CD8-positive, alpha-beta memory T cell (primary cell): ENCODE measurements at regions of chr1 and their contacts with region 1.

Region 1: DNA sequence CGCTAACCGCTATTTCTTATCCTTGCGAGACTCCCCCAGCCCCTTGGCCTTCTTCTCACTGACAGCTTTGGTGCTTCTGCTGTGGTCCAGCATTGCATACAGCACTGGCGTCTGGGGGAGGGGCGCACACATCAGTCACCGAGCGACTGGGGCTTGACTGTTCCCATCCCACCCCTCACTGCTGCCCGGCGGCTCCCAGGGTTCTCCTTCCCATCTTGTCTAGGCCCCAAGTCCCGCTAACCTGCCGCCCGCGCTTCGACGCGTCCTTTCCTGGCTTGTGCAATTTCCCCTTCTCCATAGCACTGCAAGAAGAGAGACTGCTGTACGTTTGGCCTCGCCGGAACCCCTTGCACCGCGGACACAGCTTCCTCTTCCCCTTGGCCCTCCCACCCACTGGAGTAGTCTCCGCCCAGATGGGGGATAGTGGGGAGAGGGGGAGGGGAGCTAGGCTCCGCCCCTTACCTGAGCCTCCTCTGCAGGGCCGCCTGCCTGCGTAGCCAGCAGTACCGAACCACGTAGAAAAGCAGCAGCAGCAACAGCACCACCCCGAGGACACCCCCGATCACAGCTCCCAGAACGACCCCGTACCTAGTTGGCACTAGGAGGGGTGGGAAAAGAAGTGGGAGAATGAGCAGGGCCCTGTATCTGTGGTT is 3.8 kb downstream of the MPZ start:
- DNase-seq: peak; percentile 73 to 95 (median 92)
- H3K4me3 ChIP-seq: peak overlapping the region; percentile 89
- H3K4me3 Mint-ChIP-seq: peak overlapping the region; percentile 91 to 99 (median 93)
- H3K27ac ChIP-seq: peak overlapping the region; percentile 78
- H3K27ac Mint-ChIP-seq: peak overlapping the region; percentile 79 to 100 (median 93)
- H3K4me1 ChIP-seq: peaks cover 30% of the 10 kb centered on the region
- H3K4me1 Mint-ChIP-seq: peaks cover 30 to 49% (median 42%) of the 10 kb centered on the region in 3 donors
- H3K27me3 ChIP-seq: no peaks in the 10 kb centered on the region
- H3K27me3 Mint-ChIP-seq: no peaks in the 10 kb centered on the region

Region 2: DNA sequence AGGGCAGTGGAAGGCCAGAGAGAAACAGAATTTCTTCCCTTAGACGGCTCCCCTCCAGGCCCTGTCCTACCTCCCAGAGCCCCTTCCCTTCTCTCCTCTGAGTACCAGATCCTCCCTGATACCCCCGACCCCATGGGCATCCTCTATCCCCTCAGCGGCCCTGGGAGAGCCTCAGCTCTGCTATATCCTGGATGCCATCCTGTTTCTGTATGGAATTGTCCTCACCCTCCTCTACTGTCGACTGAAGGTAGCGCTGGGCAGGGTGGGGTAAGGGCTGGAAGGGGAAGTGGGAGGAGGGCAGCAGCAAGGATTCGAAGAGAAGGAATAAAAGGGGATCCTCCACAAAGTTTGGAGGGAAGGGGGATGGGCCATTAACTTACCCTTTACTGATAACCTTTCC is 88.2 kb before region 1 on chr1:
- CTCF ChIA-PET with region 1: no interaction called
- POLR2A ChIA-PET with region 1: no interaction called
- DNase-seq: no peak
- H3K4me3 ChIP-seq: no peak overlapping the region
- H3K4me3 Mint-ChIP-seq: peak overlapping the region in 2 of 7 donors; percentile 17 to 23
- H3K27ac ChIP-seq: no peak overlapping the region
- H3K27ac Mint-ChIP-seq: peak overlapping the region in 2 of 8 donors; percentile 78 to 80
- H3K4me1 ChIP-seq: peaks cover 37% of the 10 kb centered on the region
- H3K4me1 Mint-ChIP-seq: peaks cover 24 to 42% (median 31%) of the 10 kb centered on the region in 3 donors
- H3K27me3 ChIP-seq: no peaks in the 10 kb centered on the region
- H3K27me3 Mint-ChIP-seq: peaks cover 0 to 3% of the 10 kb centered on the region in 2 donors

Region 3: DNA sequence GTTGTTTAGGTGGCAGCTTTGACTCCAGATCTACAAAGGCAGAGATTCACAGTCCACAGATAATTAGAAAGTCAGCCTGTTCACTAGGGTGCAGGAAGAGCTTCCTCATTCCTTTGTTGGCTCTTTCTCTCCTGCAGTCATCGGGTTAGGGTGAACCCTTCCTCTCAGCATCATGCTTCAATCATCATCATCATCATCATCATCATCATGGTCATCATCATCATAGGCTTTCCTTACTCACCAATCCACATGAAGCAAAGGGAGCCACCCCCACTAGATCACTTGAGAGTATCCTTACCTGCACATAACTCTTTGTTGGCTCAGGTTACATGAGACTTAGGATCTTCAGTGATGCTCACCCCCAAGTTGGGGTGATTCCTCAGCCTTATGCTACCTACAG is 15.2 kb before region 1 on chr1:
- CTCF ChIA-PET with region 1: interaction called, 17 read pairs
- POLR2A ChIA-PET with region 1: interaction called, 5 read pairs
- DNase-seq: no peak
- H3K4me3 ChIP-seq: no peak overlapping the region
- H3K4me3 Mint-ChIP-seq: no peak overlapping the region
- H3K27ac ChIP-seq: no peak overlapping the region
- H3K27ac Mint-ChIP-seq: no peak overlapping the region
- H3K4me1 ChIP-seq: no peaks in the 10 kb centered on the region
- H3K4me1 Mint-ChIP-seq: peaks cover 0 to 4% (median 0%) of the 10 kb centered on the region in 3 donors
- H3K27me3 ChIP-seq: no peaks in the 10 kb centered on the region
- H3K27me3 Mint-ChIP-seq: peaks cover 0 to 4% of the 10 kb centered on the region in 2 donors

Region 4: DNA sequence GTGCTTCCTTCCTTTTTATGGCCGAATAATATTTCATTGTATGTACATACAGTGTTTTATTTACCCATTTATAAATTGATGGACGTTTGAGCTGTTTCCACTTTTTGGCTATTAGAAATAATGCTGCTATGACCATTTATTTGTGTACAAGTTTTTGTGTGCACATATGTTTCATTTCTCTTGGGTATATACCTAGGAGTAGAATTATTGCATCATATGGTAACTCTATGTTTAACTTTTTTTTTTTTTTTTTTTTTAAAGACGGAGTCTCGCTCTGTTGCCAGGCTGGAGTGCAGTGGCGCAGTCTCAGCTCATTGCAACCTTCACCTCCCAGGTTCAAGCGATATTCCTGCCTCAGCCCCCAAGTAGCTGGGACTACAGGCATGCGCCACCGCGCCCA is 27.2 kb after region 1 on chr1:
- CTCF ChIA-PET with region 1: no interaction called
- POLR2A ChIA-PET with region 1: no interaction called
- DNase-seq: no peak
- H3K4me3 ChIP-seq: no peak overlapping the region
- H3K4me3 Mint-ChIP-seq: no peak overlapping the region
- H3K27ac ChIP-seq: no peak overlapping the region
- H3K27ac Mint-ChIP-seq: peak overlapping the region in 1 of 8 donors; percentile 26
- H3K4me1 ChIP-seq: no peaks in the 10 kb centered on the region
- H3K4me1 Mint-ChIP-seq: peaks cover 0 to 4% (median 0%) of the 10 kb centered on the region in 3 donors
- H3K27me3 ChIP-seq: no peaks in the 10 kb centered on the region
- H3K27me3 Mint-ChIP-seq: no peaks in the 10 kb centered on the region